CD4-positive, alpha-beta memory T cell (primary cell): ENCODE measurements at regions of chr5 and their contacts with region 1.

Region 1: DNA sequence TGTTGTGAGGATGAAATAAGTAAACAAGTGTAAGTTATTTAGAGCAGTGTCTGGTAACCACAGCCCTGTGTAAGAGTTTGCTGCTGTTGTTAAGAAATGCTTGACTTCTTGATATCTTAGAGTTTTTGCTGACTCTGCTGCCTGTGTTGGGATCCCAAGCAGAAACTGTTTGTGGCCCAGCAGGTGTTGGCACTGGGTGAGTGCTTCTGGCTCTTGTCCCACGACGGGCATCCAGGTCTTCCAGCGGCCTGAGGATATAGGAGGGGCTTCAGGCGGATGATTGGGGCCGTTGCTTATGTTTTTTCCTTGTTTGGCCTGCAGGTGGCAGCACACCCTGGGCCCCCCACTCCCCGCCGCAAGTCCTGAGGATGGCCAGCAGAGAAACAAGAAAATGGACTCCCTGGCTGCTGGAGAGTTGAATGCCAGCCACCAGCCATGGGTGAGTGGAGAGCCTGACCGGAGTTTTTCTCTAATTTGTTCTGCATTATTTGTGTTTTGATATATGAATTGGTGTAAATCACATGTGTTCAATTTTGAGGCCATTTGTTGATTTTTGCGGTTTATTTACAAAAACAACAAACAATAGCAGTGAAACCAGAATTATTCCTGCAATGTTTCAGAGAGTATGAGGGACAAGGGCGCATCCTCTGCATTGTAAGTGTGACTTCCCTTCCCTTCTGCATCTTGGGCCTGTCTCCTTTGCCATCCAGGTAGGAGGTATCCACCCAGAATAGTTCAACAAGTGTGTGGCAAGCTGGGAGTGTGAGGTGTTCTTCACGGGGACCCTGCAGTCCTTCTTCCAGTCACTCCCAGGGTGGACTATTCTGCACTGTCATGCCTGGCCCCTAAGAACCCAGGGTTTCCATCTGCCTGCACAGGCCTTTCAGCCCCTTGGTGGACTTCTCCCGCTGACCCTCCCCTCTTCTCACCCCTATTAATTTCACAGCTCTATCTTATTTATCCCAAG is 50.3 kb downstream of the SLC22A5 start:
- DNase-seq: peak; percentile 57 to 69 (median 64)
- H3K4me3 ChIP-seq: peak overlapping the region; percentile 38 to 51
- H3K4me3 Mint-ChIP-seq: peak overlapping the region; percentile 75 to 93 (median 80)
- H3K27ac ChIP-seq: peak overlapping the region; percentile 71
- H3K27ac Mint-ChIP-seq: peak overlapping the region; percentile 96 to 99 (median 97)
- H3K4me1 ChIP-seq: peaks cover 100% of the 10 kb centered on the region
- H3K4me1 Mint-ChIP-seq: peaks cover 76 to 98% (median 86%) of the 10 kb centered on the region in 4 donors
- H3K27me3 ChIP-seq: no peaks in the 10 kb centered on the region
- H3K27me3 Mint-ChIP-seq: no peaks in the 10 kb centered on the region

Region 2: DNA sequence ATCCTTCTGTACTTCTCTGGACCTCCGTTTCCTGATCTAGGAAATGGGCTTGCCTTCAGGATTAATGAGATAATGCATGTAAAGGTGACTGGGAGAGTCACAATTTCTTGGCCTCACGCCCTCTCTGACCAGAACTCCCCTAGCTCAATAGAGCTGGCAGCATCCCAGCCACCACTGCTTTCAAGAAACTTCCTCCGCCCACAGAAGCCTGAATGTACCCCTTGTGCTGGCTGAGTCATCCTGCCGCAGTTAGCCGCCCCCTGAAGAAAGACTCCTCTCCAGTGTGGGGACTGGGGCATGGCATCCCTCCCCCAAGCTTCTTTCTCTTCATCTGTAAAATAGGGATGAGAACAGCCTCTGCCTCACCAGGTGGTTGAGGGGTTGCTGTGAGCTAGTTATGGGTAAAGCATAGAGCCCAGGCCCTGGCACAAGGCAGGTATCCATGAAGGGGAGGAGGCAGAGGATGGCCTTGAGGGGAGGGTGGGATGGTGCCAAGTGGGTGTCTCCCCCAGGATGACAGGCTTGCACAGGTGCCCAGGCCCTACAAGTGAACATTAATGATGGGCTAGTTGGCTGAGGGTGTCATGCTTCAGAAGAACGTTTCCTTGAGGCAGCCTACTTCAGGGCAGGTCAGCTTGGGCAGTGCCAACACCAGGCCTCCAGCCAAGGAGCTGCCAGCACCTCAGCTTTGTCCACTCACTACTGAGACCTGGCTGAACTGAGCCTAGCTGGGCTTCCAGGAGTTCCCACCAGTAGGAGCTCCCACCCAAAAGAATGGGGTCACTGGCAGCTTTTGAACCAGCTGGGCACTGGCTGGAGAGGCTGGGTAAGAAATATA is 158.9 kb before region 1 on chr5:
- CTCF ChIA-PET with region 1: no interaction called
- POLR2A ChIA-PET with region 1: no interaction called
- intact Hi-C with region 1: no loop called
- DNase-seq: no peak
- H3K4me3 ChIP-seq: no peak overlapping the region
- H3K4me3 Mint-ChIP-seq: no peak overlapping the region
- H3K27ac ChIP-seq: no peak overlapping the region
- H3K27ac Mint-ChIP-seq: no peak overlapping the region
- H3K4me1 ChIP-seq: no peaks in the 10 kb centered on the region
- H3K4me1 Mint-ChIP-seq: peaks cover 0 to 4% (median under 1%) of the 10 kb centered on the region in 4 donors
- H3K27me3 ChIP-seq: peaks cover 4% of the 10 kb centered on the region
- H3K27me3 Mint-ChIP-seq: peaks cover 8 to 11% of the 10 kb centered on the region in 2 donors

Region 3: GRCh38 chr5:132272311-132273210 is 147.2 kb before region 1 on chr5:
- CTCF ChIA-PET with region 1: no interaction called
- POLR2A ChIA-PET with region 1: no interaction called
- intact Hi-C with region 1: no loop called
- DNase-seq: peak; percentile 32 to 54 (median 47)
- H3K4me3 ChIP-seq: no peak overlapping the region
- H3K4me3 Mint-ChIP-seq: peak overlapping the region in 4 of 8 donors; percentile 6 to 61 (median 41)
- H3K27ac ChIP-seq: no peak overlapping the region
- H3K27ac Mint-ChIP-seq: peak overlapping the region in 1 of 7 donors; percentile 12
- H3K4me1 ChIP-seq: no peaks in the 10 kb centered on the region
- H3K4me1 Mint-ChIP-seq: peaks cover 0 to 22% (median 12%) of the 10 kb centered on the region in 4 donors
- H3K27me3 ChIP-seq: no peaks in the 10 kb centered on the region
- H3K27me3 Mint-ChIP-seq: peaks cover 6 to 16% of the 10 kb centered on the region in 2 donors

Region 4: DNA sequence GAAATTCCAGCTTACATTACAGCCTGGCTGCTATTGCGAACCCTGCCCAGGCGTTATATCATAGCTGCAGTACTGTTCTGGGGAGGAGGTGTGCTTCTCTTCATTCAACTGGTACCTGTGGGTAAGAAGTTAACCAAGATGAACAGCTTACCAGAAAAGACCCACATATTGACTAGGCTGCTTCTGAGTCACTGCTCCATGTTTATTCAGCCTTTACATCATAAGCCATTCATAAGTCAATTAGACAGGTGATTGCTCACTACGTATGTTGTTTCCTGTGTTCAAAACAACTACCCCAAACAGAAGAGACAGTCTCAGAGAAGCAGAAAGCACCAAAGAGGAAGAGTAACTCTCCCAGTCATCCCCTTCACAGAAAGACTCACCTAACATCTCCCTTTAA is 85.0 kb before region 1 on chr5:
- CTCF ChIA-PET with region 1: no interaction called
- POLR2A ChIA-PET with region 1: no interaction called
- intact Hi-C with region 1: no loop called
- DNase-seq: peak in 2 of 5 donors; percentile 5 to 6
- H3K4me3 ChIP-seq: no peak overlapping the region
- H3K4me3 Mint-ChIP-seq: no peak overlapping the region
- H3K27ac ChIP-seq: no peak overlapping the region
- H3K27ac Mint-ChIP-seq: no peak overlapping the region
- H3K4me1 ChIP-seq: no peaks in the 10 kb centered on the region
- H3K4me1 Mint-ChIP-seq: peaks cover 0 to 3% (median 0%) of the 10 kb centered on the region in 4 donors
- H3K27me3 ChIP-seq: no peaks in the 10 kb centered on the region
- H3K27me3 Mint-ChIP-seq: no peaks in the 10 kb centered on the region

Region 5: GRCh38 chr5:132431632-132432031 is 11.8 kb after region 1 on chr5:
- CTCF ChIA-PET with region 1: interaction called, 39 read pairs
- POLR2A ChIA-PET with region 1: interaction called, 267 read pairs
- intact Hi-C with region 1: loop called (anchors 2 kb)
- DNase-seq: no peak
- H3K4me3 ChIP-seq: no peak overlapping the region
- H3K4me3 Mint-ChIP-seq: peak overlapping the region in 7 of 8 donors; percentile 29 to 75 (median 56)
- H3K27ac ChIP-seq: peak overlapping the region; percentile 77
- H3K27ac Mint-ChIP-seq: peak overlapping the region; percentile 93 to 99 (median 97)
- H3K4me1 ChIP-seq: peaks cover 99% of the 10 kb centered on the region
- H3K4me1 Mint-ChIP-seq: peaks cover 82 to 97% (median 91%) of the 10 kb centered on the region in 4 donors
- H3K27me3 ChIP-seq: no peaks in the 10 kb centered on the region
- H3K27me3 Mint-ChIP-seq: no peaks in the 10 kb centered on the region

Region 6: DNA sequence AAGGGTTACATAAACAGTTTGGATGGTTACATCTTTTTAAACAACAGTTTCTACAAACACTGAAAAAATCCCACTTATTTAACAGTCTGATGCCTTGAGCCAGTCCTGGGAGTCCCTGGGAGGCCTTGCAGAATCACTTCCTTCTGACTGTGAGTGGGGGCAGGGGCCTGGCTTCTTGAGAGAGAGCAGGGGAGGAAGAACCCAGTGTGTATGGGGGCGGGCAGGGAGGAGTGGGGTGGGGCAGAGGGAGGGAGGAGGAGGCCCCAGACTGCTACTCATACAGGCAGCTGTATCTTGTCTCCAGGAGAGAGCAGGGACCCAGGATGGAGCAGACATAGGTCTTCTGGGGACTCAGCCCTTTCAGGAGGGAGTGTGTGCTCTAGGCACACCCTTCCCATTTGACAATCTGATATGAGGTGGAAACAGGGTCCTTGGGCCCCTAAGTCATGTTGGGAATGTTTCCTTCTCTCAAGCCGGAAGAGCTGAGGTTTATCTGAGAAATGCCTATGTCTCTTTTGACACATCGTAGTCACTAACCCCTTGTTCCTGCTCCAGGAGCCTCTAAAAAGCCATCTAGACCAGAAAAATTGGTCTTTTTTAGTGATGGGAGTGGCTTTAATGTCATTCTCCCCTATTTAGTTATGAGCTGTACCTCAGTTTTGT is 17.9 kb after region 1 on chr5:
- CTCF ChIA-PET with region 1: interaction called, 15 read pairs
- POLR2A ChIA-PET with region 1: interaction called, 267 read pairs
- intact Hi-C with region 1: loop called (anchors 2 kb)
- DNase-seq: peak; percentile 49 to 75 (median 52)
- H3K4me3 ChIP-seq: peak overlapping the region; percentile 4 to 8
- H3K4me3 Mint-ChIP-seq: peak overlapping the region; percentile 52 to 85 (median 70)
- H3K27ac ChIP-seq: peak overlapping the region; percentile 60
- H3K27ac Mint-ChIP-seq: peak overlapping the region; percentile 89 to 96 (median 92)
- H3K4me1 ChIP-seq: peaks cover 99% of the 10 kb centered on the region
- H3K4me1 Mint-ChIP-seq: peaks cover 64 to 97% (median 83%) of the 10 kb centered on the region in 4 donors
- H3K27me3 ChIP-seq: no peaks in the 10 kb centered on the region
- H3K27me3 Mint-ChIP-seq: no peaks in the 10 kb centered on the region

Region 7: GRCh38 chr5:132479111-132479951 is 59.5 kb after region 1 on chr5:
- CTCF ChIA-PET with region 1: interaction called, 28 read pairs
- POLR2A ChIA-PET with region 1: interaction called, 565 read pairs
- intact Hi-C with region 1: no loop called
- DNase-seq: peak in 4 of 5 donors; percentile 24 to 39 (median 30)
- H3K4me3 ChIP-seq: no peak overlapping the region
- H3K4me3 Mint-ChIP-seq: peak overlapping the region in 2 of 8 donors; percentile 30 to 44
- H3K27ac ChIP-seq: peak overlapping the region; percentile 37
- H3K27ac Mint-ChIP-seq: peak overlapping the region; percentile 82 to 97 (median 90)
- H3K4me1 ChIP-seq: peaks cover 92% of the 10 kb centered on the region
- H3K4me1 Mint-ChIP-seq: peaks cover 39 to 94% (median 69%) of the 10 kb centered on the region in 4 donors
- H3K27me3 ChIP-seq: no peaks in the 10 kb centered on the region
- H3K27me3 Mint-ChIP-seq: no peaks in the 10 kb centered on the region

Region 8: GRCh38 chr5:133423618-133424282 is 1004.0 kb after region 1 on chr5:
- CTCF ChIA-PET with region 1: no interaction called
- POLR2A ChIA-PET with region 1: no interaction called
- intact Hi-C with region 1: no loop called
- DNase-seq: peak; percentile 47 to 57 (median 53)
- H3K4me3 ChIP-seq: no peak overlapping the region
- H3K4me3 Mint-ChIP-seq: peak overlapping the region in 1 of 8 donors; percentile 29
- H3K27ac ChIP-seq: no peak overlapping the region
- H3K27ac Mint-ChIP-seq: no peak overlapping the region
- H3K4me1 ChIP-seq: peaks cover 8% of the 10 kb centered on the region
- H3K4me1 Mint-ChIP-seq: peaks cover 6 to 9% (median 7%) of the 10 kb centered on the region in 4 donors
- H3K27me3 ChIP-seq: no peaks in the 10 kb centered on the region
- H3K27me3 Mint-ChIP-seq: peaks cover 7 to 10% of the 10 kb centered on the region in 2 donors